Calu3 (cell line): ENCODE measurements at regions of chr2 and their contacts with region 1.

Region 1: DNA sequence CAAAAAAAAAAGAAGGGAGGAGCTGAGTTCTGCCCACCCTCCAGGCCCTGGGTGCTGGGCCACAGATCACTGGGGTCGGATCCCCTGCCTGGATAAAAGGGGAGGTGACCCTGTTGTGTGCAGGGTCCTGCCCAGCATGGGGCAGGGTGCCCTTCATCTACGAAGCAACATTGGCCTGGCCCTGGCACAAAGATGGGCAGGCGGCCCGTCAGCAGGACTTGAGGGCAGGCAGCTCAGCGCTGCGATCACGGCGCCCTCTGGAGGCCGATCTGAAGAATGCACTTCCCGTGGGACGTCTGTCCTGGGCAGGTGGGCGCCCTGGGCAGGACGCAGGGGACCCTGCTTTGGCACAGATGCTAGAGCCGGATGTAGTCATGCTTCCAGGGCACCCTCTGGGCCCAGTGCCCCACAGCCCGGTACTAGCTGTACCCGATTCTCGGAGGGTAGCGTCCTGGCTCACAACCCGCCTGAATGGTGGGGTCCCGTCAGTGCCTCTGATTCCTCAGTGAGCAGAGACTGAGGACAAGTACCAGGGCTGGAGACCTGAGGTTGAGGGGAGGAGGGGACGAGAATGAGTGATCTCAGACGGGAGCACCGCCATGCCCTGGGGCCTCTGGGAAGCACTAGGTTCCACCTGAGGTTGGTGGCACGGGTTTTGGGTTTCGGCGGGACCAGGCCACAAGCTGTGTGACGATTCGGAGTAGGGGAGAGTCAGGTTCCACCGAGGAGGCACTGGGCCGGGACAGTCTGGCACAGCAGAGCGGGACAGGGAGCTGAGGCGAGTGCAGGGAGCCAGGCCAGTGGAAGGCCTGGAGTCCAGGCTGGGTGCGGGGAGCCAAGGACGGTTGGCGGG is 18.0 kb downstream of the ARID5A start:
- DNase-seq: peak; percentile 49
- H3K4me3 Mint-ChIP-seq: no peak overlapping the region
- H3K27ac Mint-ChIP-seq: peak overlapping the region; percentile 82
- H3K4me1 Mint-ChIP-seq: peaks cover 34% of the 10 kb centered on the region
- H3K27me3 Mint-ChIP-seq: no peaks in the 10 kb centered on the region
- CTCF ChIP-seq: peak; percentile 78

Region 2: GRCh38 chr2:96580771-96581170 is 26.3 kb after region 1 on chr2:
- CTCF ChIA-PET with region 1: interaction called, 25 read pairs
- intact Hi-C with region 1: loop called (anchors 2 kb)
- DNase-seq: peak; percentile 66
- H3K4me3 Mint-ChIP-seq: no peak overlapping the region
- H3K27ac Mint-ChIP-seq: no peak overlapping the region
- H3K4me1 Mint-ChIP-seq: peaks cover 5% of the 10 kb centered on the region
- H3K27me3 Mint-ChIP-seq: no peaks in the 10 kb centered on the region
- CTCF ChIP-seq: peak; percentile 58

Region 3: GRCh38 chr2:96816128-96816835 is 261.8 kb after region 1 on chr2 and contains the start of gene CNNM3:
- CTCF ChIA-PET with region 1: interaction called, 4 read pairs
- intact Hi-C with region 1: loop called (anchors 10 kb)
- DNase-seq: peak; percentile 98
- H3K4me3 Mint-ChIP-seq: peak within 1 kb of the TSS; percentile 77
- H3K27ac Mint-ChIP-seq: peak within 1 kb of the TSS; percentile 52
- H3K4me1 Mint-ChIP-seq: peaks cover 38% of the 10 kb centered on the region
- H3K27me3 Mint-ChIP-seq: no peaks in the 10 kb centered on the region
- CTCF ChIP-seq: peak; percentile 65
- total RNA-seq, gene CNNM3: 22.5 and 25.1 TPM in 2 replicates